Naive thymus-derived CD4-positive, alpha-beta T cell (primary cell): ENCODE measurements at regions of chr9 and their contacts with region 1.

Region 1: DNA sequence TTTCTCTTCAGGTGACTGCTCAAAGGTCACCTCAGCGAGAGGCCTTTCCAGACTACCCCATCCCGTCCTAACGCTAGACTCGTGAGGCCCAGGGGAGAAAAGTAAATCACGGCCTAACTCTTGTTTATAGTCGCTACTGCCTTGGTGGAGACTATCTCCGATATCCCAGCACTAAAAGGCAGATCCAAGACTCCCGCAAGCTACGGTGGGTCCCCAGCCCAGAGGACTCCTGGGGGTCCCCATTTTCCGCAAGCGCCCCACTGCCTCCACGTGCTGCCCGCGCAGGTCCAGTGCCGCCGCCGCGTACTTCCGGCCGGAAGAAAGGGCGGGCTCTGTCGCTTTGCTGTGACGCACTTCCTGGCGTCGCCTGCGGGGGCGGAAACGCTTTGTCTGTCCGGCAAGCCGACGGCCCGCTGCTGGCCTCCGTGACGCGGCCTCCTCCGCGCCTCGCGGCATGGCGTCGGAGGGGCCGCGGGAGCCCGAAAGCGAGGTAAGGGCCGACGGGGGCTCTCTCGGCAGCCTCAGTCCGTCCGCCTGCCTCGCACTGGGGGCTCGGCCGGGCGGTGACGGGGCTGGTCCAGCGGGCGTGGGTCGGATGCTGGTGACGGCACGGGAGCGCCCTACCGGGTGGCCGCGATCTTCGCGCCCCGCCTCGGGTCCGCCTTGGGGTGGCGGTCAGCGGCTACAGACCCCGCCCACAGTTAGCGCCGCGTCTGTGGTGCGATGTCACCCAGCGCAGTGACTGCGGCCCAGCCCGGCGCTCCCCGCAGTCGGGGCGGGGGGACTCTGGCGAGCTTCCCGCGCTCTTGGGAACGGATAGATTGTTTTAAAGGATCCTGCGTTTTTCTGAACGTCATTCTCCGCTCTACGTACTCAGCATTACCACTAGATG is at the start of gene SECISBP2:
- DNase-seq: peak; percentile 90 to 97 (median 93)
- ATAC-seq: peak; percentile 94
- H3K4me3 ChIP-seq: peak within 1 kb of the TSS; percentile 78
- H3K4me3 Mint-ChIP-seq: peak within 1 kb of the TSS; percentile 83 to 96 (median 92)
- H3K27ac ChIP-seq: peak within 1 kb of the TSS; percentile 99
- H3K27ac Mint-ChIP-seq: peak within 1 kb of the TSS; percentile 92 to 99 (median 98)
- H3K4me1 ChIP-seq: peaks cover 25 to 36% of the 10 kb centered on the region in 2 donors
- H3K4me1 Mint-ChIP-seq: peaks cover 24 to 74% (median 56%) of the 10 kb centered on the region in 7 donors
- H3K27me3 ChIP-seq: no peaks in the 10 kb centered on the region
- H3K27me3 Mint-ChIP-seq: no peaks in the 10 kb centered on the region
- total RNA-seq, gene SECISBP2: 55.0 to 130 (median 109) TPM

Region 2: DNA sequence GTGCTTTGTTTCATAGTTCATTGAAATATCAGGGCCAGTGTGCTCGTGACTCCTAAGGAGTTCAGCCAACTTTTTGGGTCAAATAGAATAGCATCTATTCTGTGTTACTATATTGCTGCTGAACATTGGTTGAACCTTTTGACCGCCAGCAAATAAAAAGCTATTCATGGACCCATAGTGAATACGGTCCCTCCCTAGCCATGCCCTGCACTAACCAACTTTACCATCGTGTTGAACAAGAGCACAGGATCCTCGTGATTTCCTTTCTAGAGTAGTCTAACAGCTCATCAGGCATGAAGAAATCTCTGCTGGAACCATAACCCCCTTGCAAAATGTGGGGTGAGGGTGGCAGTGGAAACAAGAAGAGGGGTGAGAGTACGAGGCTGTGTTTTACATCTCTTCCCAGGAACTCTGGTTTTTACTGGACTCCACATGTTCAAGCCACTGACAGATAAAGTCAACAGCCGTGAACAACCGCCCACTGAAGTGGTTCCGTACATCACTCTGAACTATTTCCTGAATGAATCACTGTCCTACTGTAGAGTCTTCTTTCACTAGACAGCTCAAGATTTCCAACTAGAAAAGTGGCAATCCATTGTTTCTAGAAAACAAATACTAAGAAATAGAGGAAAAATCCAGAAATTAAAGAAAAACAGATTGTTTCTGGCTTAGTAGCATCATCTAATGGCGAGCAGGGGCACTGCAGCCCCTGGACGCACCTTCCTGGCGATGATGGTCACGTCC is 1505.8 kb before region 1 on chr9:
- CTCF ChIA-PET with region 1: no interaction called
- POLR2A ChIA-PET with region 1: no interaction called
- intact Hi-C with region 1: no loop called
- DNase-seq: peak in 2 of 9 donors; percentile 10 to 46
- ATAC-seq: peak; percentile 66
- H3K4me3 ChIP-seq: no peak overlapping the region
- H3K4me3 Mint-ChIP-seq: peak overlapping the region in 7 of 10 donors; percentile 15 to 67 (median 47)
- H3K27ac ChIP-seq: no peak overlapping the region
- H3K27ac Mint-ChIP-seq: peak overlapping the region in 1 of 9 donors; percentile 6
- H3K4me1 ChIP-seq: no peaks in the 10 kb centered on the region
- H3K4me1 Mint-ChIP-seq: peaks cover 0 to 20% (median 11%) of the 10 kb centered on the region in 7 donors
- H3K27me3 ChIP-seq: no peaks in the 10 kb centered on the region
- H3K27me3 Mint-ChIP-seq: peaks cover 0 to 13% (median 6%) of the 10 kb centered on the region in 5 donors

Region 3: GRCh38 chr9:88835038-88835466 is 483.3 kb before region 1 on chr9:
- CTCF ChIA-PET with region 1: no interaction called
- POLR2A ChIA-PET with region 1: no interaction called
- intact Hi-C with region 1: loop called in 1 of 2 experiments (anchors 10 kb)
- DNase-seq: peak in 7 of 9 donors; percentile 45 to 81 (median 79)
- ATAC-seq: peak; percentile 95
- H3K4me3 ChIP-seq: no peak overlapping the region
- H3K4me3 Mint-ChIP-seq: peak overlapping the region in 9 of 10 donors; percentile 2 to 82 (median 64)
- H3K27ac ChIP-seq: no peak overlapping the region
- H3K27ac Mint-ChIP-seq: peak overlapping the region in 6 of 9 donors; percentile 22 to 90 (median 69)
- H3K4me1 ChIP-seq: peaks cover 16 to 25% of the 10 kb centered on the region in 2 donors
- H3K4me1 Mint-ChIP-seq: peaks cover 9 to 35% (median 27%) of the 10 kb centered on the region in 7 donors
- H3K27me3 ChIP-seq: peaks cover 0 to 19% of the 10 kb centered on the region in 2 donors
- H3K27me3 Mint-ChIP-seq: peaks cover 55 to 82% (median 72%) of the 10 kb centered on the region in 5 donors

Region 4: GRCh38 chr9:89375191-89375760 is 56.9 kb after region 1 on chr9:
- CTCF ChIA-PET with region 1: no interaction called
- POLR2A ChIA-PET with region 1: no interaction called
- intact Hi-C with region 1: loop called in 1 of 2 experiments (anchors 5 kb)
- DNase-seq: no peak
- ATAC-seq: peak; percentile 42
- H3K4me3 ChIP-seq: no peak overlapping the region
- H3K4me3 Mint-ChIP-seq: peak overlapping the region in 3 of 10 donors; percentile 10 to 59 (median 24)
- H3K27ac ChIP-seq: peak overlapping the region; percentile 52
- H3K27ac Mint-ChIP-seq: peak overlapping the region; percentile 37 to 90 (median 83)
- H3K4me1 ChIP-seq: peaks cover 7 to 10% of the 10 kb centered on the region in 2 donors
- H3K4me1 Mint-ChIP-seq: peaks cover 22 to 68% (median 38%) of the 10 kb centered on the region in 7 donors
- H3K27me3 ChIP-seq: no peaks in the 10 kb centered on the region
- H3K27me3 Mint-ChIP-seq: no peaks in the 10 kb centered on the region

Region 5: DNA sequence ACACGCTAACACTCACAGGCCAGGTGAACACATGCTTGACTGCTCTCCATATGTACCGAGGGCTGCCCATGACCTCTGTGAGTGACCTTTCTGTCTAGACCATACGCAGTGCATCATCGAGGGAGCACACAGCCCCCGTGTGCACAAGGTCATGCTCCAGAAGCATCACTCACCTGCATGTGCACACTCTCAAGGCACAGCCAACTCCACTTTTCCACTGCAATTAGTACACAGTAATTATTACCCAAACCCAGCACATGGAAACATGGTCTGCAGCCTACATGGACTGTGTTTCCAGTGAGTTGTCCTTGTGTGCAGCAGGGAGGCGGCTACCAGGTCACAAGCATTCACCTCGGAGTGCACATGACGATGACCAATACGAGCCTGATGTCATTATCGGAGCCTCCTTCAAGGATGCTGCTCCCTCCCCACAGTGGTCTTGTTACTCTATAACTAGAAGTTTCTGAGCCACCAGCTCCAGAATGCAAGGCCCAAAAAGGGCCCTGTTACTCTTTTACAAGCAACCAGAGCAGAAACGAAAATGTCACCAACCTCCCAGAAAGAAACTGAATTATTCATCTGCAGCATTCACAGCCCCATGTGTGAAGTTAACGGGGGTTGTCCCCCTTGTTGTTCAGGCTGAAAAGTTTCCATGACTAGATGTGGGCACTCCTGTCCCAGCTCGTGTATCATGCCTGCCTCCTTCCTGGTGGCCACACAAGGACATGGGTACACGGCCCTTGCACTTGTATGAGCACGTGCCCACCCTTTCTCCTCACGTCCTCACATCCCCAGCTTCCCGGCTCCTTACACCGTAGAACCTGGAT is 148.3 kb after region 1 on chr9:
- CTCF ChIA-PET with region 1: interaction called, 4 read pairs
- POLR2A ChIA-PET with region 1: no interaction called
- intact Hi-C with region 1: loop called (anchors 5 kb)
- DNase-seq: peak in 1 of 9 donors; percentile 68
- ATAC-seq: peak; percentile 1
- H3K4me3 ChIP-seq: peak overlapping the region; percentile 43
- H3K4me3 Mint-ChIP-seq: peak overlapping the region; percentile 67 to 92 (median 86)
- H3K27ac ChIP-seq: peak overlapping the region; percentile 74
- H3K27ac Mint-ChIP-seq: peak overlapping the region; percentile 86 to 99 (median 97)
- H3K4me1 ChIP-seq: peaks cover 96 to 99% of the 10 kb centered on the region in 2 donors
- H3K4me1 Mint-ChIP-seq: peaks cover 79 to 99% (median 95%) of the 10 kb centered on the region in 7 donors
- H3K27me3 ChIP-seq: no peaks in the 10 kb centered on the region
- H3K27me3 Mint-ChIP-seq: no peaks in the 10 kb centered on the region

Region 6: DNA sequence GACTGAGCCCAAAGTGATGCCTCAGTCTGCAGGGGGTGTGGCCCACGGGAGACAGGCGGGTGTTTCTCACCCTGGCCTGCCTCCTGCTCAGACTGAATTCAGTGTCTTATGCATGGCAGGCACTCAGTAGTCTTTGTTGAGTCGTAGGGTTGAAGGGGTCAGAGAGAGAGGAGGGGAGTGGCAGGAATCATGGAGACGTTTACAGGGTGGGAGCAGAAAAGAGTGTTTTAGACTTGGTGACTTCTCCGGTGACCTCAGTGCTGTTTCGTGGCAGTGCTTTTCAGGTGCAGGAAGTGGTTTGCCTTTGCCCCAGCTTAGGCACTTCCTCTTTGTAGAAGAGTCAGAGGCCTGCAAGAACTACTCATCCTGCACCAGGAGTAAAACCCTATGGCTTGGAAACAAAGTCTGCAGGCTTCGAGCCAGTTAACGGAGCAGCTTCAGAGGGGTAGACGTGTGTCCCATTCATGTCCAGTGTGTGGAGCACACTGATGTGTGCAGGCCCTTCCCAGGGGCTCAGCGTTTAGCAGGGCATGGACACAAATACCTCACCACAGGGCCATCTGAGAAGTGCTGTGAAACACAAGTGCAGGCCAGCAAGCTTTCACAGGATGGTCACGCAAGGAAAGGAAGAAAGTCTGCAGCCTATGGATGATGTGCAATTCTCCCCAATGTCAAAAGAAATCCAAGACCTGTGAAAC is 204.0 kb after region 1 on chr9:
- CTCF ChIA-PET with region 1: no interaction called
- POLR2A ChIA-PET with region 1: no interaction called
- intact Hi-C with region 1: loop called in 1 of 2 experiments (anchors 1 kb)
- DNase-seq: peak; percentile 33 to 91 (median 88)
- ATAC-seq: peak; percentile 91
- H3K4me3 ChIP-seq: peak overlapping the region; percentile 40
- H3K4me3 Mint-ChIP-seq: peak overlapping the region; percentile 18 to 90 (median 82)
- H3K27ac ChIP-seq: peak overlapping the region; percentile 72
- H3K27ac Mint-ChIP-seq: peak overlapping the region; percentile 94 to 100 (median 97)
- H3K4me1 ChIP-seq: peaks cover 94 to 95% of the 10 kb centered on the region in 2 donors
- H3K4me1 Mint-ChIP-seq: peaks cover 81 to 97% (median 95%) of the 10 kb centered on the region in 7 donors
- H3K27me3 ChIP-seq: no peaks in the 10 kb centered on the region
- H3K27me3 Mint-ChIP-seq: no peaks in the 10 kb centered on the region

Region 7: DNA sequence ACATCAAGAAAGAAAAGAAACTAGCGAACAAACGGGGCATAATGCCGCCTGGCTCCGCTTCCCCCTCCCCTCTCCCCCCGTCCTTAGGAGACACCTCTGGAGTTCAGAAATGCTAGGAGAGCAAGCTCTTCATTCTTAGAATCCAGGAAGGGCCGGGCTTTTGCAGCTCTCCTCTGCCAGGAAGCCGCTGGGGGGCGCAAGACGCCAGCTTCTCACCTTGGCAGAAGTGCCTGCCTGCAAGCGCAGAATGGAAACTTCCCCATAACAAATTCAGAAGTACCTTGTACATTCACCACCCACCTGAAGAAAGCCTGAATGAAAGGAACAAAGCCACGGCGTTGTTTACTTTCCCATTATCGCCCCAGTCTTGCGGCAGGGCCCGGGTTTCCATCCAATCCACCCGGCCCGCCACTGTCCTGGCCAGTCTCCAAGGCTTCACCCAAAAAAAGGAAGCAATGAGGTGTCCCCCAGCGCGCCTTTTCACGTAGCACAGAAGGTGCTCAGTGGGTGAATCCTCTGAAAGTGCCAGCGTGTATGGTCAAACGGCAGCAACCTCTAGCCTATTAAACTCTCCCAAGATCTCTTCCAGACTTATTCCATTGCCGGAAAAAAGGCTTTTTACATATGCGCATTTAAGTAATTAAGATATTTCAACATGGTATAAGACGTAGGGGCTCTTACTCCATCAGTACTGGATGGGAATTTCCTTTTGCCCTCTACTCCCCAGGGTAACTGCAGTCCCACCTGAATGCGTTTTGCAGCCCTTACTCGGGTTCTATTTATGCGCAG is 284.8 kb after region 1 on chr9:
- CTCF ChIA-PET with region 1: no interaction called
- POLR2A ChIA-PET with region 1: no interaction called
- intact Hi-C with region 1: loop called (anchors 2 kb)
- DNase-seq: peak; percentile 74 to 88 (median 85)
- ATAC-seq: peak; percentile 55
- H3K4me3 ChIP-seq: peak overlapping the region; percentile 72
- H3K4me3 Mint-ChIP-seq: peak overlapping the region; percentile 79 to 92 (median 88)
- H3K27ac ChIP-seq: no peak overlapping the region
- H3K27ac Mint-ChIP-seq: peak overlapping the region in 7 of 9 donors; percentile 12 to 88 (median 62)
- H3K4me1 ChIP-seq: peaks cover 12 to 23% of the 10 kb centered on the region in 2 donors
- H3K4me1 Mint-ChIP-seq: peaks cover 0 to 34% (median 23%) of the 10 kb centered on the region in 7 donors
- H3K27me3 ChIP-seq: no peaks in the 10 kb centered on the region
- H3K27me3 Mint-ChIP-seq: peaks cover 0 to 21% (median 0%) of the 10 kb centered on the region in 5 donors